ENCODE measurements at regions of chr6 and their contacts with region 1.

Region 1: DNA sequence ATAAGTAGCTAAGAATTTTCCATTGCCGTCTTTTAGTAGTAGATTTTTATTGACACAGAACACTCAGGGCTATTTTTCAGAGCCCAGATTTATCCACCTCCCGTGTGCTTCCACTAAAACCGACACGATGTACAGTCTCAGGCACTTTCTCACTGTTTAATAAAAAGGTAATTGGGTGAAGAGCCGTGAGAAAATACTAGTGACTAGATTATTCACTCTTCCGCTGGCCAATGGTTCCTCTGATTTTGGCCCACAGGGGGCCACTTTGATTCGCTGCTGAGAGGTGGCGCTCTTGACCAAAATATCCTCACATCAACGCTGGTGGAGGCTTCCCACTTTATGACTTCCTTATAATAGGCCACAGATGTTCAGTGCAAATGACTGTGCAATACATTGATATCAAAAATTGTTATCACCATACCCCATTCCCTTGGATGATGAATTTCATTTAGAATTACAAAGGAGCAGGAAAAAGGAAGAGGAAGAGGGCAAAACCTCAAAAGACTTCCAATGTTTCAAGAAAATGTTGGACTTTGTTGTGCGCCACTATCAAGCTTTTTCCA is 12.3 kb upstream of the HDDC2 start:
- DNase-seq: peak; percentile 81

Region 2: GRCh38 chr6:125764121-125764671 is 450.1 kb after region 1 on chr6:
- in situ Hi-C with region 1: loop called (anchors 10 kb)
- DNase-seq: no peak